CD14-positive monocyte (primary cell): ENCODE measurements at regions of chr6 and their contacts with region 1.

Region 1: DNA sequence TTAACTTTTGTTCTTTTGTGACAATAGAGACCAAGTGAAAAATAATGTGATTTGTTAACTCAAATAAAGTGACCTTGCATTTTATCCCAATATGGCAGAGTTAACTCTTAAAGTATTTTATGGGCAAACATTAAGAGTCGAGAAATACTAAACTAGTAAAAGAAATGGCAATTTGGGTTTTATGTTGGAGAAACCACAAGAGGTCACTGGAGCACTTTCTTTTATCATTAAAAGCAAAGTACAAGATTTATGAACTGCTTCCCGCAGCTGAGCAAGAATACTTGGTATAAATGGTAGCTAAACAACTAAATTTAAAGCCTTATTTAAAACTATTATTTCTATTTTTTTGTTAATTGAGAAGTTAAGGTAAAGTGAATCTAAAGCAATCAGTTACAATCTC is 33.5 kb upstream of the MCM9 start:
- DNase-seq: no peak
- H3K4me3 ChIP-seq: no peak overlapping the region
- H3K4me3 Mint-ChIP-seq: no peak overlapping the region
- H3K27ac ChIP-seq: no peak overlapping the region
- H3K27ac Mint-ChIP-seq: no peak overlapping the region
- H3K4me1 ChIP-seq: peaks cover 0 to 3% of the 10 kb centered on the region in 2 donors
- H3K4me1 Mint-ChIP-seq: peaks cover 3% of the 10 kb centered on the region
- H3K27me3 ChIP-seq: no peaks in the 10 kb centered on the region
- H3K27me3 Mint-ChIP-seq: peaks cover 0 to 3% (median 0%) of the 10 kb centered on the region in 3 donors
- CTCF ChIP-seq: no peak

Region 2: DNA sequence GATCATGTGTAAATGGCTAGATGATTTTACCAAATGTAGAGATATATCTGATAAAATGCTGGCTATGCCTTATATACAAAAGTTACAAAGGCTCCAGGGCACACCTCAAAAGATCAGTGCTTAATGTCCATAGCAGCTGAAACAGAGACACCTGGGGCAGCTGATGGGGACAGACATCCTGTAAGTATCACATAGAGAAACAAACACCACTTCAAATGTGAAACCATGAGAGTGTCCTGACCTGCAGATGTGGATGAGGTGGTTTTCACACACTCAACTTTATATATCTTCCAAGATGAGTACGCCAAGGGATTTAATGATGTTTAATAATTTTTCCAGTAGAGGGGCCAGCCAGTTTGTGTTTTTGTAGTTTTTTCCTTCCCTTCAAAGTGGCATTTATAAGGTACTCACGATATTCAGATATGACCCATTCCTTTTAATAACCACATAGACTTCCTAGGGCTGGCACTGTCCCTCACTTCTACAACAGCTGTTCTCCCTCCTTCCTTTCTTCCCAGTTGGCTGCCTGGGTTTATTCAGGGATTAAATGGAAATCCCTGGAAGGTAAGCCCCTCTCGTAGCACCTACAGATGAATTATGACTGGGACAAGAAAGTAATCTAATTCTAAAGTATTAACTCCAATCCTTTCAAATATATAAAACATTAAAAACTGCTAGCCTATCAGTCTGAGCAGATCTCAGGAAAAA is 16.9 kb after region 1 on chr6:
- intact Hi-C with region 1: no loop called
- DNase-seq: no peak
- H3K4me3 ChIP-seq: no peak overlapping the region
- H3K4me3 Mint-ChIP-seq: no peak overlapping the region
- H3K27ac ChIP-seq: no peak overlapping the region
- H3K27ac Mint-ChIP-seq: no peak overlapping the region
- H3K4me1 ChIP-seq: no peaks in the 10 kb centered on the region
- H3K4me1 Mint-ChIP-seq: no peaks in the 10 kb centered on the region
- H3K27me3 ChIP-seq: no peaks in the 10 kb centered on the region
- H3K27me3 Mint-ChIP-seq: no peaks in the 10 kb centered on the region
- CTCF ChIP-seq: no peak

Region 3: DNA sequence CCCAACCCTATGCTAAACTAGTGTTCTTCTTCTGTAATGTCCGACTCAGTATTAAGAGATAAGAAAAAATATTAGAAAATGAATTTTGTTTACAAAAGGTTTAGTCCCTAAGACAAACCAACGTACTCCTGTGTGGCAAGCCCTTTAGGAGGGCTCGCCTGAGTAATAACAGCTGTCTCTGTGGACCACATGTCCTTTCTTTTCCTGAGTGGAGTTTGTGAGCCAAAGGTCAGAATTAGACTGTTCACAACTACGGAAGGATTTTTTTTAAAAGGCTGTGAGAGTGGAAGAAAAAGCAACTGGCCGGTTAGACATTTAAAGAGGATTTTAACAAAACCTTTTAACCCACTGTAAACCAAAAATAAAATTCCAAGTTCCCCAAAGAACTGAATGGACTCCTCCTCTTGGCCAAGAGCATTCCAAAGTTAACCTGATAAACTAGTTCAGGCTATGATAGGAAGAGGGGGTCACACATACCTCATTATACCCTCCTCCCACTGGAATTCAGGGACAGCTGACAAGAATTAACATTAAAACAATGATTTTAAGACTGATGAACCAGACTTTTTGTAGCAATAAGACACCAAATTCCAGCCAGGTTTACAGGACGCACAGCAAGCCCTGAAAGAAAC is 66.5 kb after region 1 on chr6:
- intact Hi-C with region 1: no loop called
- DNase-seq: no peak
- H3K4me3 ChIP-seq: no peak overlapping the region
- H3K4me3 Mint-ChIP-seq: no peak overlapping the region
- H3K27ac ChIP-seq: no peak overlapping the region
- H3K27ac Mint-ChIP-seq: no peak overlapping the region
- H3K4me1 ChIP-seq: no peaks in the 10 kb centered on the region
- H3K4me1 Mint-ChIP-seq: no peaks in the 10 kb centered on the region
- H3K27me3 ChIP-seq: no peaks in the 10 kb centered on the region
- H3K27me3 Mint-ChIP-seq: peaks cover 0 to 1% (median 0%) of the 10 kb centered on the region in 3 donors
- CTCF ChIP-seq: no peak

Region 4: GRCh38 chr6:119105282-119105681 is 136.9 kb after region 1 on chr6:
- intact Hi-C with region 1: loop called (anchors 10 kb)
- DNase-seq: peak in 1 of 3 donors; percentile 35
- H3K4me3 ChIP-seq: no peak overlapping the region
- H3K4me3 Mint-ChIP-seq: no peak overlapping the region
- H3K27ac ChIP-seq: no peak overlapping the region
- H3K27ac Mint-ChIP-seq: no peak overlapping the region
- H3K4me1 ChIP-seq: no peaks in the 10 kb centered on the region
- H3K4me1 Mint-ChIP-seq: no peaks in the 10 kb centered on the region
- H3K27me3 ChIP-seq: no peaks in the 10 kb centered on the region
- H3K27me3 Mint-ChIP-seq: peaks cover 2 to 6% (median 3%) of the 10 kb centered on the region in 3 donors
- CTCF ChIP-seq: no peak

Region 5: DNA sequence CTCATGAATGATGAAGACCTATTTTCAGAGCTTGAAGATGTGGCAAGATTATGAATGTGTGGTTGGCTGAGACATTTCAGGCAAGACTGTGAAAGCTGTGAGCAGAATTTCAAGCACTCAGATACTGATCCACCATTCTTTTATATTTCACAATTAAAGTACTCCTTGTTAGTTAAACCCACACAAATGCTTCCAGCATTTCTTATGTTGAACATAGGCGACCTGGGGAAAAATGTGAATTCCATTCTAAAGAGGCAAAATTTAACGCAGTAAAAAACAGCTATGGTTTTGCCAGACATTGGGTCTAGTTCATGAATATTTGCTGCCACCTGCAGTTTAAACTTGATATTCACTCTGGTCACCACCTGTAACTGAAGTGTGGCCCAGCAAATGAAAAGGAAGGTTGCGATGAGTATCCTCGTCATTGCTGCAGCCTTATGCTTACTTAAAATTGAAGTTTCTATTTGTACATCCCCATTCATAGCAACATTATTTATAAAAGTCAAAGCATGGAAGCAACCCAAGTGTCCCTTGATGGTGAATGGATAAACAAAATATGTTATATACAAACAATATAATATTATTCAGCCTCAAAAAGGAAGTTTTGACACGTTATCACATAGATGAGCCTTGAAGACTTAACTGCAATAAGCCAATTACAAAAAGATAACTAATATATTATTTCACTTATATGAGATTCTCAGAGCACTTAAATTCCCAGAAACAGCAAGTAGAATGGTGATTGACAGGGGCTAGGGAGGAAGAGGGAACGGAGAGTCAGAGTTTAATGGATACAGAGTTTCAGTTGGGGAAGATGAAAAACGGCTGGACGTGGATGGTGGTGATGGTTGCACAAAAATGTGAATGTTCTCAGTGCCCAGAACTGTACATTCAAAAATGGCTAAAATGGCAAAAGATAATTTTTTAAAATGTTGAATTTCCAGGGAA is 142.5 kb after region 1 on chr6:
- intact Hi-C with region 1: loop called (anchors 10 kb)
- DNase-seq: peak; percentile 25 to 45 (median 43)
- H3K4me3 ChIP-seq: no peak overlapping the region
- H3K4me3 Mint-ChIP-seq: no peak overlapping the region
- H3K27ac ChIP-seq: no peak overlapping the region
- H3K27ac Mint-ChIP-seq: no peak overlapping the region
- H3K4me1 ChIP-seq: peaks cover 13 to 16% of the 10 kb centered on the region in 2 donors
- H3K4me1 Mint-ChIP-seq: peaks cover 15% of the 10 kb centered on the region
- H3K27me3 ChIP-seq: no peaks in the 10 kb centered on the region
- H3K27me3 Mint-ChIP-seq: peaks cover 2% of the 10 kb centered on the region in 3 donors
- CTCF ChIP-seq: peak; percentile 67